ENCODE measurements at regions of chr18 and their contacts with region 1.

Region 1: DNA sequence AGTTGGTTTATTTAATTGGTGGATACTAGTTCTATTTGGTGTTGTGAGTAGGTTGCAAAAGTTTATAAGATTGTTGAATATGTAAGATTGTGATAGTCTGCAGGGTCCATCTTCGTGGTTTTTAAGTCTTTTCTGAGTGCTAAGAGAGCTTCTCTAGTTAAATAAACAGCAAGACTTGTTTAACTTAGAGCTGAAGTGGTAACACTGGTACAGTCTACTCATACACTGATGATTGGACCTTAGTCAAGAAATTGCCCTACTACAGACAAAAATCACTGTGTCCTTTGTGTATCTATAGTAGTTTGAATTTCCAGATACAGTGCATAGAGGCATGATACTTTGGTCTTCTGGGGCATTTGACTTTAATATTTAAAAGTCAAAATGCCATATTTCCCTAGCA is 94.6 kb downstream of the PHLPP1 start:
- DNase-seq: no peak
- H3K4me3 ChIP-seq: no peak overlapping the region
- H3K4me3 Mint-ChIP-seq: no peak overlapping the region
- H3K27ac ChIP-seq: no peak overlapping the region
- H3K27ac Mint-ChIP-seq: no peak overlapping the region
- H3K4me1 ChIP-seq: no peaks in the 10 kb centered on the region
- H3K4me1 Mint-ChIP-seq: peaks cover 0 to 17% (median 7%) of the 10 kb centered on the region in 3 donors
- H3K27me3 ChIP-seq: no peaks in the 10 kb centered on the region
- H3K27me3 Mint-ChIP-seq: no peaks in the 10 kb centered on the region

Region 2: GRCh38 chr18:62795813-62796212 is 14.1 kb before region 1 on chr18:
- CTCF ChIA-PET with region 1: no interaction called
- POLR2A ChIA-PET with region 1: interaction called, 12 read pairs
- DNase-seq: no peak
- H3K4me3 ChIP-seq: no peak overlapping the region
- H3K4me3 Mint-ChIP-seq: no peak overlapping the region
- H3K27ac ChIP-seq: no peak overlapping the region
- H3K27ac Mint-ChIP-seq: no peak overlapping the region
- H3K4me1 ChIP-seq: no peaks in the 10 kb centered on the region
- H3K4me1 Mint-ChIP-seq: peaks cover 9 to 20% (median 10%) of the 10 kb centered on the region in 3 donors
- H3K27me3 ChIP-seq: no peaks in the 10 kb centered on the region
- H3K27me3 Mint-ChIP-seq: no peaks in the 10 kb centered on the region

Region 3: DNA sequence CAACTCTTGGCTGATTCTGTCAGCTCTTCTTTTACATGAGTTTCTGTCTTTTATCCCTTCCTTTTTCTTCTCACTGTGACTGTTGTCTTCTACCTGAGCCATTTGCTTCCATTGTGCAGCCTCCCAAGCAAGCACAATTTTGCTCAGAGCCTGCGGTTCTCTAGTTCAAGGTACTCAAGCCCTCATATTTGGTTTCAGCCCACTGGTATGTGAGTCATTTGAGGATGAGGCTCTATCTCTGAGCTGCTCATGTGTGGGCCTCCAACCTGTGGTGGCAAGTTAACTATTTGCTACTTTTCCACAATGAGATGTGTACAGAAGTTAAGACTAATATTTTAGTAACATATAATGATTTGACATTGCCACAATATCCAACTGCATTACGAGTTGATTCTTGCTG is 88.5 kb after region 1 on chr18:
- CTCF ChIA-PET with region 1: no interaction called
- POLR2A ChIA-PET with region 1: no interaction called
- DNase-seq: no peak
- H3K4me3 ChIP-seq: no peak overlapping the region
- H3K4me3 Mint-ChIP-seq: no peak overlapping the region
- H3K27ac ChIP-seq: no peak overlapping the region
- H3K27ac Mint-ChIP-seq: no peak overlapping the region
- H3K4me1 ChIP-seq: no peaks in the 10 kb centered on the region
- H3K4me1 Mint-ChIP-seq: no peaks in the 10 kb centered on the region
- H3K27me3 ChIP-seq: no peaks in the 10 kb centered on the region
- H3K27me3 Mint-ChIP-seq: no peaks in the 10 kb centered on the region